T-cell (primary cell): ENCODE measurements at regions of chr4 and their contacts with region 1.

Region 1: DNA sequence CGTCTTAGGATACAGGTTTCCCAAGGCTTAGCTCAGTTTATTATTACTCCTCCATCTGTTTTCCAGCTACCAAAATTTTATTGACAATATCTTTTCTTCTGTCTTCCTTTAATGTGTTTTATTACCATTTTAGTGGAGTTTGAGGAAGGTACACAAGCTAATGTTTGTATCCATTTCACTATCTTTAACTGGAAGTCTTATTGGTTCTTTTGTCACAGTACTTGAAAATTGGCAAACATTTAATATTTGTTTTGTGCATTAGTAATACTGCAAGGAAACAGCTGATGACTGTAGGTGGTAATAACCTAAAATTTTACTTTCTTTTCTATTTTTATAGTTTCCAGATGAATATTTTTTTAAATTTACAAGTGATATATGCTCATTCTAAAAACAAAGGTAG is 9.3 kb upstream of the ARL9 start:
- DNase-seq: no peak
- ATAC-seq: no peak
- H3K4me3 ChIP-seq: no peak overlapping the region
- H3K4me3 Mint-ChIP-seq: no peak overlapping the region
- H3K27ac ChIP-seq: no peak overlapping the region
- H3K27ac Mint-ChIP-seq: no peak overlapping the region
- H3K4me1 ChIP-seq: no peaks in the 10 kb centered on the region
- H3K4me1 Mint-ChIP-seq: no peaks in the 10 kb centered on the region
- H3K27me3 ChIP-seq: no peaks in the 10 kb centered on the region
- H3K27me3 Mint-ChIP-seq: no peaks in the 10 kb centered on the region

Region 2: DNA sequence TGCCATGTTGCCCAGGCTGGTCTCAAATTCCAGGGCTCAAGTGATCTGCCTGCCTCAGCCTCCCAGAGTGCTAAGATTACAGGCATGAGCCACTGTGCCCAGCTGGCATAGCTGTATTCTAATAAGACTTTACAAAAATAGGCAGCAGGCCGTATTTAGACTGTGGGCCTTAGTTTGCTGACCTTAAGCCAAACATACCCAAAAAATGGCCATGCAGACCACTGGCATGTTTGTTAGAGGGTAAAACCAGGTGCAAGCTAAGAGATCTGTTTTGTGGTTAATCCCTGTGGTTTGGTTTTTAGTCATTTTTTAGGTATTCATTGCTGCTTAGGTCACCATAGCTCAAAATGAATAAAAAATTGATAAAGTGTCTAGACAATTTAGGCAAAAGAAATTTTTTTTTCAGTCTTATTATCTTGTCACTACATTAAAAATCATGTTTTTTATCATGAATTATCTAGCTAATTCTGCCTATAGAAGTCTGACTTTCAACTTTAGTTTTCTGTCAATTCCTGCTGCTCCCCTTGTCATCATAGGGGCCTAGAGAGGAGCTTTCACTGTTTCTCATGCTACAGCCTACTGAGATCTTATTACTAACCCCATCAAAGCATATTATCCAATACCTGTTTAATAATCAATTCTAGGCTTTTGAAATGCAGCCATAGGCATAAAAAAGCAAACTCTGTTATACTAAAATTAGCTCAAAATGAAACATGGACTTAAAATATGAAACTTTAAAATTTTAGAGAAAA is 332.7 kb after region 1 on chr4:
- CTCF ChIA-PET with region 1: no interaction called
- POLR2A ChIA-PET with region 1: interaction called in 1 of 2 experiments, 11 read pairs
- DNase-seq: no peak
- ATAC-seq: no peak
- H3K4me3 ChIP-seq: no peak overlapping the region
- H3K4me3 Mint-ChIP-seq: no peak overlapping the region
- H3K27ac ChIP-seq: no peak overlapping the region
- H3K27ac Mint-ChIP-seq: no peak overlapping the region
- H3K4me1 ChIP-seq: no peaks in the 10 kb centered on the region
- H3K4me1 Mint-ChIP-seq: no peaks in the 10 kb centered on the region
- H3K27me3 ChIP-seq: no peaks in the 10 kb centered on the region
- H3K27me3 Mint-ChIP-seq: no peaks in the 10 kb centered on the region

Region 3: DNA sequence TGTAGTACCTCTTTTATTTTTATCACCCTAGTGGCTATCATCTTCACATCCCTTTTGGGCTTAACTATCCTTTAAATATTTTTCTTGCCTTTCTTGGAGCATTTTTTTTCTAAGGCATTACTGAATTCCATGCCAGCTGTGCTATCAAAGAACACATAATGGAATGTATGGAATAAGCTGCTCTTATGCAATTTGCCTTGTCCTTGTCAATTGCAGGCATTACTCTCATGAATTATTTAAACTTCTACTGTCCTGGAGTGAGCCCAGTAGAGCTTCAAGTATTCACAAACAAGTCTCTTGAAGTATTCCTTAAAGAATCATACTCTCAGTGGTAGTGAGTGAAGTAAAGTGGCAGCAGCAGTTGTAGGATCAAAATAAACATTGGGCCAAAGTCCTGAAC is 758.5 kb after region 1 on chr4:
- CTCF ChIA-PET with region 1: no interaction called
- POLR2A ChIA-PET with region 1: no interaction called
- DNase-seq: no peak
- ATAC-seq: no peak
- H3K4me3 ChIP-seq: no peak overlapping the region
- H3K4me3 Mint-ChIP-seq: no peak overlapping the region
- H3K27ac ChIP-seq: no peak overlapping the region
- H3K27ac Mint-ChIP-seq: no peak overlapping the region
- H3K4me1 ChIP-seq: no peaks in the 10 kb centered on the region
- H3K4me1 Mint-ChIP-seq: no peaks in the 10 kb centered on the region
- H3K27me3 ChIP-seq: no peaks in the 10 kb centered on the region
- H3K27me3 Mint-ChIP-seq: no peaks in the 10 kb centered on the region